Calu3 (cell line): ENCODE measurements at regions of chr4 and their contacts with region 1.

Region 1: DNA sequence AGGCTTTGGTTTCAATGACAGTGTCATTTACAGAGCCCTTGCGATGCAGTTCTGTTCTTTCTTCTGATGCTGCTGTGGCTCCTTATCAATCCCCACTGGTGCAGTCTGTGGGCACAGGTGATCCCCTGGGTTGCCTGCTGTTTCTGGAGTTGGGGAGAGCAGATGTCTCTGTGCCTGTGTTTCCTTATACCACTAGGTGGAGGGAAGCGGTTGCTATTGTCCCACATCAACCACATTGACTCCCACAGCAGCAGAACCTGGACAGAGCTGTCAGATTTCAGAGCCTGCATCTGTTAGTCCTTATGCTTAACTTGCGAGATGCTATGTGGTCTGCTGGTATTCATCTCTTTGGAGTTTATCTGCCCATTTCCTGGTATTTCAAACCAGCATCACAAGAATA is 57.7 kb downstream of the NEIL3 start:
- DNase-seq: peak; percentile 32
- H3K4me3 Mint-ChIP-seq: no peak overlapping the region
- H3K27ac Mint-ChIP-seq: no peak overlapping the region
- H3K4me1 Mint-ChIP-seq: no peaks in the 10 kb centered on the region
- H3K27me3 Mint-ChIP-seq: no peaks in the 10 kb centered on the region
- CTCF ChIP-seq: no peak

Region 2: GRCh38 chr4:177283167-177283566 is 84.2 kb before region 1 on chr4:
- CTCF ChIA-PET with region 1: no interaction called
- intact Hi-C with region 1: no loop called
- DNase-seq: no peak
- H3K4me3 Mint-ChIP-seq: no peak overlapping the region
- H3K27ac Mint-ChIP-seq: no peak overlapping the region
- H3K4me1 Mint-ChIP-seq: no peaks in the 10 kb centered on the region
- H3K27me3 Mint-ChIP-seq: no peaks in the 10 kb centered on the region
- CTCF ChIP-seq: no peak

Region 3: DNA sequence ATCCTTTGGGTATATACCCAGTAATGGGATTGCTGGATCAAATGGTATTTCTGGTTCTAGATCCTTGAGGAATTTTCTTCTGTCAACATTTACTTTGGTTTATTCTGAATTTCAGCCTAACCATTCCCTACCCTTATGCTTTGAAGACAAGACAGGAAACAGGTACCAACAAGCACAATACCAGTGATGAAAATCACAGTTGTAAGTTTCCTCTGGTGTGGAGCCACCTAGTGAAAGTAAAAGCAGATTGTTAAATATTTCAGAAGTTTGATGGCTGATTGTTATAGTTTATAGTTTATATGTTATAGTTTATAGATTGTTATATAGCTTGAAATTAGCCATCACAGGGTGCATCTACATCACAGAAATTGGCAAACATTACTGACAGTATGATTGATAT is 179.4 kb after region 1 on chr4:
- CTCF ChIA-PET with region 1: no interaction called
- intact Hi-C with region 1: loop called (anchors 1 kb)
- DNase-seq: no peak
- H3K4me3 Mint-ChIP-seq: no peak overlapping the region
- H3K27ac Mint-ChIP-seq: no peak overlapping the region
- H3K4me1 Mint-ChIP-seq: no peaks in the 10 kb centered on the region
- H3K27me3 Mint-ChIP-seq: no peaks in the 10 kb centered on the region
- CTCF ChIP-seq: no peak